IMR-90 (cell line): ENCODE measurements at regions of chr12 and their contacts with region 1.

Region 1: DNA sequence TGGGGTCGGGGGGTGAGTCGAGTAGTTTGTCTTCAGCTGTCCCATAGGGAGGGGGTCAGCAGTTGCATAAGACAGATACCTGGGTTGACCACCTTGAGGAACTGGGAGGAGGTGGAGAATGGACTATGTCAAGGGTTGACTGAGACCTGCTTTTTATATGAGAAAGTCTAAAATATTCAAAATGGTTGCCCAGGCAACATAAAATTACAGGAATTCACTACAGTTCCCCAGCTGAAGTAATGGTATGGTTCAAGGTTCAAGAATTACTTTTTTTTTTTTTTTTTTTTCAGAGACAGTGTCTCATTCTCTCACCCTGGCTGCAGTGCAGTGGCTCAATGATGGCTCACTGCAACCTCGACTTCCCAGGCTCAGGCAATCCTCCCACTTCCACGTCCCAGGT is 5.1 kb upstream of the TCHP start:
- DNase-seq: no peak
- ATAC-seq: no peak
- H3K4me3 ChIP-seq: no peak overlapping the region
- H3K27ac ChIP-seq: no peak overlapping the region
- H3K4me1 ChIP-seq: peaks cover 3% of the 10 kb centered on the region; the same call in 1 of the 2 replicates
- H3K27me3 ChIP-seq: no peaks in the 10 kb centered on the region; the same call in 1 of the 2 replicates
- CTCF ChIP-seq: no peak
- POLR2A ChIP-seq: no peak
- RAD21 ChIP-seq: no peak

Region 2: GRCh38 chr12:109910969-109911348 is 16.0 kb after region 1 on chr12:
- CTCF ChIA-PET with region 1: no interaction called
- POLR2A ChIA-PET with region 1: interaction called, 16 read pairs
- dilution Hi-C with region 1: no loop called
- in situ Hi-C with region 1: no loop called
- intact Hi-C with region 1: no loop called
- DNase-seq: peak; percentile 20
- ATAC-seq: peak; percentile 61; the same call in 1 of the 2 replicates
- H3K4me3 ChIP-seq: no peak overlapping the region
- H3K27ac ChIP-seq: no peak overlapping the region
- H3K4me1 ChIP-seq: no peaks in the 10 kb centered on the region
- H3K27me3 ChIP-seq: no peaks in the 10 kb centered on the region
- CTCF ChIP-seq: peak; percentile 55
- POLR2A ChIP-seq: no peak
- RAD21 ChIP-seq: peak; percentile 33

Region 3: GRCh38 chr12:109961201-109961600 is 66.3 kb after region 1 on chr12:
- CTCF ChIA-PET with region 1: no interaction called
- POLR2A ChIA-PET with region 1: no interaction called
- dilution Hi-C with region 1: no loop called
- in situ Hi-C with region 1: no loop called
- intact Hi-C with region 1: no loop called
- DNase-seq: no peak
- ATAC-seq: no peak
- H3K4me3 ChIP-seq: no peak overlapping the region
- H3K27ac ChIP-seq: no peak overlapping the region
- H3K4me1 ChIP-seq: 0 out of 2 replicates have a peak, but pooled peaks cover 1% of the 10 kb centered on the region
- H3K27me3 ChIP-seq: no peaks in the 10 kb centered on the region
- CTCF ChIP-seq: no peak
- POLR2A ChIP-seq: no peak
- RAD21 ChIP-seq: no peak